ENCODE measurements at regions of chr14 and their contacts with region 1.

Region 1: GRCh38 chr14:20343092-20343861 is at the start of gene PARP2:
- DNase-seq: peak; percentile 95 to 98 (median 98)
- H3K4me3 ChIP-seq: peak within 1 kb of the TSS; percentile 57 to 98 (median 85)
- H3K27ac ChIP-seq: peak within 1 kb of the TSS; percentile 73 to 98 (median 93)
- H3K27me3 ChIP-seq: no peaks in the 10 kb centered on the region
- CTCF ChIP-seq: peak in 24 of 56 donors; percentile 11 to 49 (median 32)
- total RNA-seq, gene PARP2: 26.7 to 81.9 (median 48.4) TPM

Region 2: DNA sequence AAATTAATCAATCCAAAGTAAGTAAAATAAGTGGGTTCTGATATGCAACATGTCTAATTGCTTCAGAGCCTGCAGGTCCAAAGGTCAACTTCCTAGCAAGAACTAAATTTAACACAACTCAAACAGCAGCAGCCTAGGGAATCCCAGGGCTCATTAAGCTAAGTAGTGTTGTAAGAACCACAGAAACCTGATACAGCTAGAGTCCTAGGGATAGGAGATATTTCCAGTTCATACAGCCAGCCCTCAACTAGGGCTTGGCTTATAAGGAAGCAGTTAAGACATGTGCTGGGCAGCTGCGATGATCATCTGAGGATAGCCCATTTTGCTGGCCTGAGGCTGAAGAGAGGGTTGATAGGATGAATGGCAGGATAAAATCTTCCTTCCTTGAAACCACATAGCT is 600.0 kb before region 1 on chr14 and contains the start of gene OR4Q3:
- intact Hi-C with region 1: no loop called
- DNase-seq: no peak
- H3K4me3 ChIP-seq: no peak within 1 kb of the TSS
- H3K27ac ChIP-seq: no peak within 1 kb of the TSS
- H3K27me3 ChIP-seq: peaks cover 0 to 8% (median 0%) of the 10 kb centered on the region in 45 donors
- CTCF ChIP-seq: no peak
- total RNA-seq, gene OR4Q3: not detected

Region 3: GRCh38 chr14:20262642-20263128 is 80.6 kb before region 1 on chr14:
- intact Hi-C with region 1: no loop called
- DNase-seq: no peak
- H3K4me3 ChIP-seq: no peak overlapping the region
- H3K27ac ChIP-seq: no peak overlapping the region
- H3K27me3 ChIP-seq: no peaks in the 10 kb centered on the region
- CTCF ChIP-seq: no peak

Region 4: GRCh38 chr14:20332788-20333493 is 10.3 kb before region 1 on chr14 and contains the start of gene CCNB1IP1:
- intact Hi-C with region 1: loop called in 1 of 2 experiments (anchors 1 kb)
- DNase-seq: peak in 7 of 10 donors; percentile 37 to 69 (median 47)
- H3K4me3 ChIP-seq: peak within 1 kb of the TSS; percentile 44 to 87 (median 74)
- H3K27ac ChIP-seq: peak within 1 kb of the TSS; percentile 44 to 93 (median 83)
- H3K27me3 ChIP-seq: no peaks in the 10 kb centered on the region
- CTCF ChIP-seq: peak in 7 of 56 donors; percentile 3 to 23 (median 12)
- total RNA-seq, gene CCNB1IP1: 23.9 to 53.0 (median 36.4) TPM

Region 5: DNA sequence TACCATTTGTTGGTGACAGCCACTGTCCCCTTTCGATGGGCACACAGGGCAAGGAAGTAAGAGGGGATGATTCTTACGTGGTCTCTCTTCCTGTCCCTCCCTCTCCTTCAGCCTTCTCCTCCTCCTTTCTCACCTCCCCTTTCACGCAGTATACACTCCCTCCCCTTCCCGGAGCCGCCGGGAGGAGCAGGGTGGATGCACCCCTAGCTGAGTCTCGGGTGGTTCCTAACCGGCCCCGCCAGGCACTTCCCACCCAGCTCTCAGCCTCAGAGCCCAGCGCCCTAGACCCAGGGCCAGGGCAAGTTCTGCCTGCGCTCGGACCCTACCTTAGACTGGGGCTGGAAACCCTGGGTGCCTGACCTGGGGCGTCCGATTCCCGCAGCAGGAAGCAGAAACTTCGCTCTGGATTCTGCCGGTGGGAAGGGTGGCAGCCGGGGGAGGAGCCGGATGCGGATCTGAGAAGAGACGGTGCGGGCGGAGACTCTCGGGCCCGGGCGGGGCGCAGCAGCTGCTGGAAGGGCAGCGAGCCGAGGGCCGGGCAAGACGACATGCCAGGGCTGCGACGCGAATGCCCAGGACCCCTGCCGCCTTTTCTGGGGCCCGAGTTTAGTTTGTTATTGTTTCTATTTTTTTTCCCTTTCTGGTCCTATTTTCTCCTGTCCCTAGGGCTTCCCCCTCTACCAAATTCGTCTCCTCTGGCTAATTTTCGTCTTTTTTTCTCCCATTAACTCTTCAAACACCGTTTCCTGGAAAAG is 69.9 kb after region 1 on chr14 and contains the start of gene TEP1:
- intact Hi-C with region 1: loop called in 1 of 2 experiments (anchors 5 kb)
- DNase-seq: peak; percentile 63 to 86 (median 78)
- H3K4me3 ChIP-seq: peak within 1 kb of the TSS; percentile 53 to 96 (median 84)
- H3K27ac ChIP-seq: peak within 1 kb of the TSS; percentile 44 to 96 (median 88)
- H3K27me3 ChIP-seq: no peaks in the 10 kb centered on the region
- CTCF ChIP-seq: peak in 9 of 56 donors; percentile 12 to 43 (median 32)
- total RNA-seq, gene TEP1: 7.8 to 36.4 (median 17.7) TPM

Region 6: GRCh38 chr14:20454516-20455354 is 111.5 kb after region 1 on chr14 and contains the starts of genes APEX1 and OSGEP:
- intact Hi-C with region 1: loop called in 1 of 2 experiments (anchors 5 kb)
- DNase-seq: peak; percentile 98 to 99 (median 99)
- H3K4me3 ChIP-seq: peak within 1 kb of the TSS; percentile 63 to 99 (median 88)
- H3K27ac ChIP-seq: peak within 1 kb of the TSS; percentile 53 to 99 (median 93)
- H3K27me3 ChIP-seq: no peaks in the 10 kb centered on the region
- CTCF ChIP-seq: peak in 14 of 56 donors; percentile 0 to 44 (median 16)
- total RNA-seq, gene APEX1: 36.8 to 106 (median 72.0) TPM
- total RNA-seq, gene OSGEP: 29.3 to 87.4 (median 51.0) TPM

Region 7: DNA sequence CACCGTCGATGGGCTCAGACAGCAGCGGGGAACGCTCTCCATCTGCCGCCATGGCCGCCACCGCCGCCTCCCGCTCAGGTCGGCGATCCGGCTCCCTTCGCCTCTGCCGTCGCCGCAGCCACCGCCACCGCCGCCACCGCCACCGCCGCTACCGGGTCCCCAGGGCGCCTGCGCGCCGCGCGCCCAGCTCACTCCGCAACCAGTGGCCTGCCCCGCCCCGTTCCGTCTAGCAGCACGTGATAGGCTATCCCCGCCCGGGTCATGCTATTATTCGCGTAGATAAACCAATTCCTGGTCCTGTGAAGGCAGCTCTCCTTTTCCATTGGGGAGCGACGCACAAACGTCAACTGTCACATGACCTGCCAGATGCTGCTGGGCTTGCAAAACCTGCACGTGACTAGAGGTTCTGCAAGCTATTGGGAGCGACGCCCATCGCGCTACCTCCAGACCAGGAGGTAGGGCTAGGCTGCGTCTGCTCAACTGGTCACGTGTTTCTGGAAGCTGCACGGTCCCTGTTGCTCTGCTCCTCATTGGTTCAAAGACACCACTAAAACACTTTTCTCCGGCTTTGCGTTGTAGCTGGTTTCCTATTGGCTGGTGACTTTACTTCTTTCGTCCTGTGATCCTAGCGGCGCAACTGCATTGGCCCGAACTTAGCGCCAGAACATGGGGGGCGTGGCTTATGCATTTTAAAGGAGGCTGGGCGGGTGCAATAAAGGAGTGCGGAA is 118.2 kb after region 1 on chr14 and contains the start of gene PIP4P1:
- intact Hi-C with region 1: loop called (anchors 1 to 5 kb)
- DNase-seq: peak; percentile 99 to 100 (median 99)
- H3K4me3 ChIP-seq: peak within 1 kb of the TSS; percentile 73 to 100 (median 95)
- H3K27ac ChIP-seq: peak within 1 kb of the TSS; percentile 63 to 98 (median 94)
- H3K27me3 ChIP-seq: no peaks in the 10 kb centered on the region
- CTCF ChIP-seq: peak in 14 of 56 donors; percentile 4 to 52 (median 22)
- total RNA-seq, gene PIP4P1: 40.7 to 70.2 (median 53.0) TPM

Measured in dorsolateral prefrontal cortex (tissue), 120 donors.